ENCODE measurements at regions of chr1 and their contacts with region 1.

Region 1: GRCh38 chr1:205485338-205486228 is 18.9 kb upstream of the CDK18 start:
- DNase-seq: peak; percentile 42 to 73 (median 59)
- ATAC-seq: peak; percentile 63 to 76 (median 73)
- H3K4me3 ChIP-seq: no peak overlapping the region
- H3K27ac ChIP-seq: no peak overlapping the region
- H3K4me1 ChIP-seq: peaks cover 0 to 5% (median 0%) of the 10 kb centered on the region in 12 donors
- H3K27me3 ChIP-seq: peaks cover 0 to 30% (median 10%) of the 10 kb centered on the region in 9 donors
- CTCF ChIP-seq: peak; percentile 93 to 99 (median 97)
- POLR2A ChIP-seq: no peak

Region 2: GRCh38 chr1:205300886-205301821 is 184.4 kb before region 1 on chr1:
- intact Hi-C with region 1: no loop called
- DNase-seq: peak in 1 of 5 donors; percentile 14
- ATAC-seq: peak; percentile 36 to 59 (median 38)
- H3K4me3 ChIP-seq: no peak overlapping the region
- H3K27ac ChIP-seq: no peak overlapping the region
- H3K4me1 ChIP-seq: peaks cover 0 to 8% (median 0%) of the 10 kb centered on the region in 12 donors
- H3K27me3 ChIP-seq: no peaks in the 10 kb centered on the region
- CTCF ChIP-seq: no peak
- POLR2A ChIP-seq: no peak

Region 3: DNA sequence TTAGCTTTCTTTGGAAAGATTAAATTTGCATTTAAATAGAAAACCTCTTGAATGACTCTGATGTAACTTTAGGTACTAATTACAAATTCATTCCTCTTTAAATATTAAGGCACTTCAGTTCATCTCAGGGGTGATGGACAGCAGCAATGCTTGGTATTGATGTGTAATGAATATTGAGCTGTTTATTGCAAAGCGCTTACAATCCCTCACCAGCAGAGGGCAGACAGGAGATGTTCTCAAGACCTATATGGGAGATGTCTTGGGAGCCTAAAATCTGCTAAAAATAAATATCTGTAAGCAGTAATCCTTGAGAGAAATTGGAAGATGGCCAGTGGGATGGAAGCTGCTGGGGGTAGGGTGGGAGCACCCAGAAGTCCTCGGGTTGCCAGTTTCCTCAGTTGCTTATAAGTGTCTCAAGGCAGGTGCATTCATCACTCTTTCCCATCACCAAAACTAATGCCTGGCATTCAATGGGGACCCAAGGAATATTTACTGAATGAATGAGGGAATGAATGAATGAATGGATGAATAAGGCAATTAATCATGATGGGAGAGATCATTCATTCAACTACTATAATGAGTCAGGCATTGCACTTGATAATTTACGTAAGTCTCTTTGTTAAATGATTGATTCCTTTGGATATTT is 131.2 kb before region 1 on chr1:
- intact Hi-C with region 1: loop called in 9 of 10 experiments (anchors 1 to 10 kb)
- DNase-seq: peak in 3 of 5 donors; percentile 45 to 59 (median 54)
- ATAC-seq: peak in 2 of 4 donors; percentile 52 to 67
- H3K4me3 ChIP-seq: no peak overlapping the region
- H3K27ac ChIP-seq: no peak overlapping the region
- H3K4me1 ChIP-seq: peaks cover 0 to 15% (median 0%) of the 10 kb centered on the region in 12 donors
- H3K27me3 ChIP-seq: peaks cover 0 to 16% (median 8%) of the 10 kb centered on the region in 9 donors
- CTCF ChIP-seq: peak; percentile 70 to 92 (median 82)
- POLR2A ChIP-seq: no peak

Region 4: GRCh38 chr1:205430696-205431305 is 54.8 kb before region 1 on chr1:
- intact Hi-C with region 1: loop called in 7 of 10 experiments (anchors 5 to 10 kb)
- DNase-seq: peak in 4 of 5 donors; percentile 42 to 63 (median 56)
- ATAC-seq: peak; percentile 63 to 86 (median 74)
- H3K4me3 ChIP-seq: peak overlapping the region in 11 of 12 donors; percentile 28 to 65 (median 55)
- H3K27ac ChIP-seq: no peak overlapping the region
- H3K4me1 ChIP-seq: peaks cover 0 to 12% (median 4%) of the 10 kb centered on the region in 12 donors
- H3K27me3 ChIP-seq: no peaks in the 10 kb centered on the region
- CTCF ChIP-seq: peak; percentile 66 to 89 (median 78)
- POLR2A ChIP-seq: no peak

Region 5: DNA sequence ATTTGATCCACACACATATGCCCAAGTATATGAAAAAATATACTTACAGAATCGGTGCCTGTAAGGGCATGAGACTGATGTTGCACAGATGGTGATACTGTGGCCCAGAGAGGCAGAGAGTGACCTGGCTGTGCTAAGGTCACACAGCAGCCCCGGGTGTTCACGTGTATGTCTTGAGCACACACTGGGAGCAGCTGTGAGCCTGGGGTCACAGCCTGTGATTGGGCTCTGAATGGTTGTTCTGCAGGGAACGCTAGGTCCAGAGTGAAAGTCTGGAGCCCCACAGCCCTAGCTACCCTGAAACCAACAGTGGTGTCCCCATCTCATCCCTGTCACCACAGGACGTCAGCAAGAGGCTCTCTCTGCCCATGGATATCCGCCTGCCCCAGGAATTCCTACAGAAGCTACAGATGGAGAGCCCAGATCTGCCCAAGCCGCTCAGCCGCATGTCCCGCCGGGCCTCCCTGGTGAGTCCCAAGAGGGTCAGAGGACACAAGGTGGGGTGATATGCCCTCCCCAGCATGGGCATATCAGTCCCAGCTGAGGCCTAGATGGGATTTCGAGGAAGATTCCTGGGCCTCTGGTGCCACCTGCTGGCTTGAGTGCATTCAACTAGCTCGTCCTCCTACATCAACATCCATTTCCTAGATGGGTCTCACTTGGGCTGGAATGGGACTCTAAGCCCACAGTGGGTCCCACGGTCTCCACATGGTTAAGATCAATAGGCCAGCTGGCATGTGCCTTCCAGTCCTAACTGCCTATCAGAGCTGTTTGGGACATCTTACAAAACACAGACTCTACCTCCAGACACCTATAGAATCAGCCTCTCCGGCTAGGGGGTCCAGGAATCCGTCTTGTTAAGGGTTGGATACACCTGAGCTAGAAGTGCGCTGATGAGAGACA is 38.6 kb after region 1 on chr1:
- intact Hi-C with region 1: loop called (anchors 1 to 2 kb)
- DNase-seq: peak; percentile 71 to 83 (median 76)
- ATAC-seq: peak; percentile 26 to 59 (median 46)
- H3K4me3 ChIP-seq: no peak overlapping the region
- H3K27ac ChIP-seq: no peak overlapping the region
- H3K4me1 ChIP-seq: peaks cover 0 to 74% (median 41%) of the 10 kb centered on the region in 12 donors
- H3K27me3 ChIP-seq: no peaks in the 10 kb centered on the region
- CTCF ChIP-seq: peak; percentile 64 to 88 (median 82)
- POLR2A ChIP-seq: no peak

Region 6: GRCh38 chr1:205631727-205632373 is 146.3 kb after region 1 on chr1 and contains the start of gene ELK4:
- intact Hi-C with region 1: loop called in 2 of 10 experiments (anchors 5 kb)
- DNase-seq: peak; percentile 99 to 100 (median 99)
- ATAC-seq: peak; percentile 99 to 100 (median 99)
- H3K4me3 ChIP-seq: peak within 1 kb of the TSS; percentile 47 to 88 (median 74)
- H3K27ac ChIP-seq: peak within 1 kb of the TSS; percentile 89 to 97 (median 95)
- H3K4me1 ChIP-seq: peaks cover 4 to 50% (median 22%) of the 10 kb centered on the region in 12 donors
- H3K27me3 ChIP-seq: no peaks in the 10 kb centered on the region
- CTCF ChIP-seq: peak; percentile 67 to 92 (median 76)
- POLR2A ChIP-seq: peak in 1 of 2 donors; percentile 97
- total RNA-seq, gene ELK4: 18.5 to 54.9 (median 36.5) TPM

Measured in heart left ventricle (tissue), 16 donors.